ENCODE measurements at regions of chr6 and their contacts with region 1.

Region 1: DNA sequence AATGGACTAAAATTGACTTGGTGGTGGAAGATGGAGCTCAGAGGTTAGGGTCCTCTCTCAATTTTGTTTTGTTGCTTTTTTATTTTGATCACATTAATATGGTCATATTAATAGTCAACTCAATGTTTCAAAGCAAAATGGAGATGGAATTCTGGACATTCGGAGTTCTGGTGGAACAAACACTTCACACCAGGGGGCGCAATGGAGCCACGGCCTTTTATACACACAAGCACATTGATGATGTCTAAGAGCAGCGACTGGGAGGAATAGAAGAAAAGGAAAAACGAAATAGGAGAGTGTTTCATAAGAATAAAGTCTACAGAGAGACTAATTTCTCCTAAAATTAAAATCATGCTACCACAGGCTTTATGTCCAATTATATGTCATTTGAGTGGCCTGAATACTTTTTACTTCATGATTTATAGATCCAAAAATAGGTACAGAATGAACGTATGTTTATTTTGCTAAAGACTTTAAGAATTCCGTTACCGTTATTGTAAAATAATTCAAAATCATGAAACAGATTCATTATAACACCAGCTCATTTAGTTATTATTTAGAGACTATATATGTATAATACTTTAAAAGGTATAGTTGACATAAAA is 197.6 kb upstream of the SASH1 start:
- DNase-seq: peak; percentile 75
- ATAC-seq: no peak
- H3K4me3 ChIP-seq: peak overlapping the region; percentile 50; the same call in 1 of the 2 replicates
- H3K27ac ChIP-seq: no peak overlapping the region
- H3K4me1 ChIP-seq: peaks cover 32% of the 10 kb centered on the region
- H3K27me3 ChIP-seq: no peaks in the 10 kb centered on the region
- CTCF ChIP-seq: peak; percentile 80

Region 2: DNA sequence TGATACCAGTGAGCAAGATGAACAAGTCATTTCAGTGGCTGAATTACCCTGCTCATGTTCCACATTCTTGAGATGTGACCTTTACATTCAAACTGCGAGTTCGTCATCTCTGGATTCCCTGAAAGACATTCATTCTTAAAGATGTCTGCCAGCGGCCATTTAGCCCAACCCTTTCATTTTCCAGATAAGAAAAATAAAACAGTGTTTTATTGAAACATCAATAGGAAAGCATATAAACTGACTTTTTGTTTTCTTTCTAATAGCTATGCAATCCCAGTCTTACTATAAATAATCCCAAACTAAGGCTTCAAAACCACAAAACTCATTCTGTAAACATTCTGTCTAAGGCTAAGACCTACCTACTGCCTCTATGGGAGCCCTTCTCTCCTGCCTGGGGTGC is 502.6 kb before region 1 on chr6:
- CTCF ChIA-PET with region 1: no interaction called
- POLR2A ChIA-PET with region 1: no interaction called
- intact Hi-C with region 1: loop called (anchors 5 kb)
- DNase-seq: peak; percentile 68
- ATAC-seq: peak; percentile 87
- H3K4me3 ChIP-seq: no peak overlapping the region; the same call in 1 of the 2 replicates
- H3K27ac ChIP-seq: peak overlapping the region; percentile 46
- H3K4me1 ChIP-seq: peaks cover 16% of the 10 kb centered on the region
- H3K27me3 ChIP-seq: no peaks in the 10 kb centered on the region
- CTCF ChIP-seq: no peak

Region 3: GRCh38 chr6:148037496-148037895 is 107.5 kb before region 1 on chr6:
- CTCF ChIA-PET with region 1: no interaction called
- POLR2A ChIA-PET with region 1: no interaction called
- intact Hi-C with region 1: loop called (anchors 5 kb)
- DNase-seq: peak; percentile 79
- ATAC-seq: peak; percentile 97
- H3K4me3 ChIP-seq: no peak overlapping the region
- H3K27ac ChIP-seq: no peak overlapping the region
- H3K4me1 ChIP-seq: peaks cover 14% of the 10 kb centered on the region
- H3K27me3 ChIP-seq: no peaks in the 10 kb centered on the region
- CTCF ChIP-seq: no peak

Region 4: GRCh38 chr6:148250975-148251685 is 106.1 kb after region 1 on chr6:
- CTCF ChIA-PET with region 1: no interaction called
- POLR2A ChIA-PET with region 1: no interaction called
- intact Hi-C with region 1: no loop called
- DNase-seq: peak; percentile 56
- ATAC-seq: peak; percentile 67
- H3K4me3 ChIP-seq: no peak overlapping the region
- H3K27ac ChIP-seq: no peak overlapping the region
- H3K4me1 ChIP-seq: no peaks in the 10 kb centered on the region
- H3K27me3 ChIP-seq: no peaks in the 10 kb centered on the region
- CTCF ChIP-seq: peak; percentile 67

Measured in PC-3 (cell line).